Breast epithelium (tissue), 4 donors: ENCODE measurements at regions of chr7 and their contacts with region 1.

Region 1: GRCh38 chr7:16564909-16565426 is 38.3 kb downstream of the LRRC72 start:
- DNase-seq: no peak
- H3K4me3 ChIP-seq: no peak overlapping the region
- H3K27ac ChIP-seq: no peak overlapping the region
- H3K4me1 ChIP-seq: no peaks in the 10 kb centered on the region
- H3K27me3 ChIP-seq: no peaks in the 10 kb centered on the region
- CTCF ChIP-seq: peak; percentile 28 to 76 (median 76)
- POLR2A ChIP-seq: no peak

Region 2: GRCh38 chr7:16071246-16071857 is 493.6 kb before region 1 on chr7:
- intact Hi-C with region 1: loop called (anchors 10 kb)
- DNase-seq: no peak
- H3K4me3 ChIP-seq: no peak overlapping the region
- H3K27ac ChIP-seq: no peak overlapping the region
- H3K4me1 ChIP-seq: peaks cover 3 to 5% of the 10 kb centered on the region in 2 donors
- H3K27me3 ChIP-seq: no peaks in the 10 kb centered on the region
- CTCF ChIP-seq: peak; percentile 80 to 90 (median 88)
- POLR2A ChIP-seq: no peak

Region 3: DNA sequence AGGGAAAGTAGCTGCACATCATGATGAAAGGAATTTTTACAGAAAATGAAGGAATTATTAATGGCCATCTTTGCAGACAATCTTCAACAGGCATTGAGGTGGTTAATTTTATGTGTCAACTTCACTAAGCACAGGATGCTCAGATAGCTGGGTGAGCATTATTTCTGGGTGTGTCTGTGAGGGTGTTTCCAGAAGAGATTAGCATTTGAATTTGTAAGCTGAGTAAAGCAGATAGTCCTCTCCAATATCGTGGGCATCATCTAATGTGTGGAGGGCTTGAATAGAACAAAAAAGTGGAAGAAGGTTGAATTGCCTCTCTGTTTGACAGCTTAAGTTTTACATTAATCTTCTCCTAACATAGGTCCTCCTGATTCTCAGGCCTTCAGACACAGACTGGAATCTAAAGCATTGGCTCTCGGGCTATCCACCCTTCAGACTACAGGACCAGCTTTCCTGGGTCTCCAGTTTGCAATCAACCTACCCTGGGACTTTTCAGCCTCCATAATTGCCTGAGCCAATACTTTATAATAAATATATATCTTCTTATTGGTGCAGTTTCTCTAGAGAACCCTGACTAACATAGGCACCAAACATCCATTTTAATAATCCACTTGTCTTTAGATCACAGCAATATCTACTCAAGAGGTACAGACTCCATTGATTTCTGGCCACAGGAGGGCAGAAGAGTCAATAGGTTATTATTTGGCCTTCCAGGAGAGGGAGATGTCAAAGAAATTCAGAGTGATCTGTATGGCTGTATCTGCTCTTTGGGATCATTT is 133.1 kb before region 1 on chr7:
- intact Hi-C with region 1: loop called (anchors 10 kb)
- DNase-seq: no peak
- H3K4me3 ChIP-seq: no peak overlapping the region
- H3K27ac ChIP-seq: no peak overlapping the region
- H3K4me1 ChIP-seq: no peaks in the 10 kb centered on the region
- H3K27me3 ChIP-seq: no peaks in the 10 kb centered on the region
- CTCF ChIP-seq: peak in 2 of 3 donors; percentile 42 to 78
- POLR2A ChIP-seq: no peak